Activated T-helper 1 cell treated with anti-CD3 and anti-CD28 coated beads, Interleukin-12 subunit alpha, Interleukin-12 subunit beta, Interleukin-2, Interleukin-4 antibody, amounts not matched to agents 30 ng/mL and 10 ng/mL and 1 ng/mL, durations not matched to agents 14 hours and 24 hours and 36 hours (primary cell): ENCODE measurements at regions of chr18 and their contacts with region 1.

Region 1: GRCh38 chr18:37537868-37538525 is 27.6 kb downstream of the CELF4 start:
- DNase-seq: peak; percentile 21
- H3K4me3 Mint-ChIP-seq: no peak overlapping the region
- H3K27ac Mint-ChIP-seq: no peak overlapping the region
- H3K4me1 Mint-ChIP-seq: no peaks in the 10 kb centered on the region
- H3K27me3 Mint-ChIP-seq: peaks cover 14% of the 10 kb centered on the region

Region 2: DNA sequence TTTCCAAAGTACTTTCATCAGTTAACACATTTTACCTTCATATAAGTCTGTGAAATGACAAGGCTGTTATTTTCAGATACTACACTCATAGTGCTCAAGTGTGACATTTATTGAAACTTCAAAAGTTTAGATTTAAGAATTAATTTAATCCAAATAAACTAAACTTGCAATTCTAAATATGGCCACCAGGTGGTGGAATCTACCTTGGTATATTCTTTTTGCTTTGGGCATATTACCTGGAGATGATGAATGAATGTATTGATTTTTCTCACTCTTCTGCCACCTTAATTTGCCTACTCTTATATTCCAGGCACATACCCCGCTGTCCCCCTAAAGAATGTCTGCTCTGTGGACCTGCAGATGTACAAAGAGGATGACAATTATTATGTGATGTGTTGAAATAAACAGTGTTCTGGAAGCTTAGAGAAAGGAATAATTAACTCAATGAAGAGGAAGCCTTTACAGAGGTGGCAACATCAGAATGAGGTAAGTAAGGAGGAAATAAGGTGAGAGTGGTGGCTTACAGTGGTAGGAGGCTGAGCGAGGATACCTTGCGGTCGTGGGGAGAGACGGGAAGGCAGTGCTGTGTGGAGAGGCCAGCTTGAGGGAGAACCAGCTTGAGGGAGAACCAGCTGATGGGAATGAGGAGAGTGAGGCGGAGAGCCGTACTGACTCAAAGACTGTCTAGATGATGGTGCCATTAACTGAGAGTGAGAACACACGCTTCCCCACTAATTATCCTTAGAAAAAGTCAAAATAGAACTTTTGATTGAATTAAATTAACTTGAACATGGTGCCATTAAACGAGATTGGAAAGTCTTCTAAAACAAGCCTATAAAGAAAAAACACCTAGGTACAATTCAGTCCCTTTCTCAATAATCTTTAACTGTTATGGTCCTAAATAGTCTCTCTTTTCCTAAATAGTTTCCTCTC is 151.9 kb before region 1 on chr18:
- intact Hi-C with region 1: loop called (anchors 1 kb)
- DNase-seq: no peak
- H3K4me3 Mint-ChIP-seq: no peak overlapping the region
- H3K27ac Mint-ChIP-seq: no peak overlapping the region
- H3K4me1 Mint-ChIP-seq: no peaks in the 10 kb centered on the region
- H3K27me3 Mint-ChIP-seq: peaks cover 9% of the 10 kb centered on the region

Region 3: GRCh38 chr18:37445368-37445767 is 92.6 kb before region 1 on chr18:
- intact Hi-C with region 1: loop called (anchors 1 kb)
- DNase-seq: no peak
- H3K4me3 Mint-ChIP-seq: no peak overlapping the region
- H3K27ac Mint-ChIP-seq: no peak overlapping the region
- H3K4me1 Mint-ChIP-seq: peaks cover 6% of the 10 kb centered on the region
- H3K27me3 Mint-ChIP-seq: peaks cover 3% of the 10 kb centered on the region

Region 4: GRCh38 chr18:37502036-37502435 is 36.0 kb before region 1 on chr18:
- intact Hi-C with region 1: no loop called
- DNase-seq: no peak
- H3K4me3 Mint-ChIP-seq: no peak overlapping the region
- H3K27ac Mint-ChIP-seq: no peak overlapping the region
- H3K4me1 Mint-ChIP-seq: no peaks in the 10 kb centered on the region
- H3K27me3 Mint-ChIP-seq: no peaks in the 10 kb centered on the region